ENCODE measurements at regions of chr1 and their contacts with region 1.

Region 1: DNA sequence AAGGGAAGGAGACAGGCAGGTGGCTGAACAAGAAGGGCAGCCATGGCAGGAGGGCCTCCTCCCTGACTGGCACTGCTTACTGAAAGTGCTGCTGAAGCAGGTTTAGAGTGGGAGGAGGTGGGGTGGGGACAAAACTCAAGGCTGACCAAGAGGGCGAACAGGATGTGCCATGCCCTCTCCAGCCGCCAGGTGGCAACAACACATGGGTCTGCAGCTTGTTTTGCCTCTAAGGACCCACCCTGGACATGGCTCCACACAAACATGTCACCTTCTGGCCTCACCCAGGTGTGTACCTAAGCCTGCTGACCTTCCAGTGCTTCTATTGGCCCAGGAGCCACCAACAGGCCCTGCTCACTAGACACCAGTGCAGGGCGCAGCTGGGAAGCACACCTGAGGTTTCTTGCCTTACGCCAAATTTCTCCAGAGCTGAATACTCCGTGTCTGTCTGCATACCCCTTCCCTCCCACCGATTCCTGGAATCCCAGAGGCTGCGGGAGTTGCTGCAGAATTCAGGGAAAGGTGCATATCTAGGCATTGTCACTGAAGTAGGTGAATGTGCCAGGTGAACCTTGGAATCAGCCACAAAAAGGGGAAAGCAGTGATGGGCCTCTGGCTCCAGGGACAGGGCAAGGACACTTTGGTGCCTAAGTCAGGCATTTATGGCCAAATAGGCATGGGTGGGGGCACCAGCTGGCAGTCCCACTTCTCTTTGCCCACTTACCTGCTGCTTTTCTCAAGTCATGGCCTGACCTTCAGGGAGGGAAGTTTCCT is 5.3 kb downstream of the PSRC1 start:
- DNase-seq: peak; percentile 56
- H3K4me3 ChIP-seq: no peak overlapping the region
- H3K27ac ChIP-seq: no peak overlapping the region
- H3K4me1 ChIP-seq: peaks cover 59% of the 10 kb centered on the region
- H3K27me3 ChIP-seq: no peaks in the 10 kb centered on the region
- CTCF ChIP-seq: peak; percentile 92 to 94

Region 2: GRCh38 chr1:109239580-109240095 is 38.0 kb before region 1 on chr1:
- CTCF ChIA-PET with region 1: no interaction called
- dilution Hi-C with region 1: loop called (anchors 5 kb)
- in situ Hi-C with region 1: no loop called
- intact Hi-C with region 1: no loop called
- DNase-seq: peak; percentile 61
- H3K4me3 ChIP-seq: no peak overlapping the region
- H3K27ac ChIP-seq: peak overlapping the region; percentile 95
- H3K4me1 ChIP-seq: peaks cover 33% of the 10 kb centered on the region
- H3K27me3 ChIP-seq: no peaks in the 10 kb centered on the region
- CTCF ChIP-seq: peak; percentile 55 to 81

Region 3: DNA sequence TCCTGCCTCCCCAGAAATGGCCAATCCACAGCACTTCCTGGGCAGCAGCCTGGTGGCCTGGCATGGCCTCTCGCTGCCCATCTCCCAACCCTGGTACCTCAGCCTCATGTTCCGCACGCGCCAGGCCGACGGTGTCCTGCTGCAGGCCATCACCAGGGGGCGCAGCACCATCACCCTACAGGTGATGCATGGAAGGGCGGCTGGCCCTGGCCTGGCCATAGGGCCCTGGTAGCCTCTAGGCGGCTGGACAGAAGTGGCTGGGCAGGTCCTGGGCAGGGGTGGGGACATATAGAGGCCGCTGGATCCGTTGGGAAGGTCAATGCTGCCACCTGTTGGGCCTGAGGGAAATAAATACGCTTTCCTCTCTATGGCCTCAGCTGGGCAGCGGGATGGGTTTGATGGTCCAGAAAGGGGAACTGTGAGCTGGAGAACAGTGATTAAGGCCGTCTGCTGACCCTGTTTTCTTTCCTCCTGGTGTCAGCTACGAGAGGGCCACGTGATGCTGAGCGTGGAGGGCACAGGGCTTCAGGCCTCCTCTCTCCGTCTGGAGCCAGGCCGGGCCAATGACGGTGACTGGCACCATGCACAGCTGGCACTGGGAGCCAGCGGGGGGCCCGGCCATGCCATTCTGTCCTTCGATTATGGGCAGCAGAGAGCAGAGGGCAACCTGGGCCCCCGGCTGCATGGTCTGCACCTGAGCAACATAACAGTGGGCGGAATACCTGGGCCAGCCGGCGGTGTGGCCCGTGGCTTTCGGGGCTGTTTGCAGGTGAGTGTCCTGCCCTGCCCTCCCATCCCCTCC is 13.8 kb before region 1 on chr1:
- CTCF ChIA-PET with region 1: interaction called, 4 read pairs
- dilution Hi-C with region 1: no loop called
- in situ Hi-C with region 1: no loop called
- intact Hi-C with region 1: loop called (anchors 1 kb)
- DNase-seq: no peak
- H3K4me3 ChIP-seq: no peak overlapping the region
- H3K27ac ChIP-seq: peak overlapping the region; percentile 40
- H3K4me1 ChIP-seq: peaks cover 32% of the 10 kb centered on the region
- H3K27me3 ChIP-seq: no peaks in the 10 kb centered on the region
- CTCF ChIP-seq: peak; percentile 100

Region 4: DNA sequence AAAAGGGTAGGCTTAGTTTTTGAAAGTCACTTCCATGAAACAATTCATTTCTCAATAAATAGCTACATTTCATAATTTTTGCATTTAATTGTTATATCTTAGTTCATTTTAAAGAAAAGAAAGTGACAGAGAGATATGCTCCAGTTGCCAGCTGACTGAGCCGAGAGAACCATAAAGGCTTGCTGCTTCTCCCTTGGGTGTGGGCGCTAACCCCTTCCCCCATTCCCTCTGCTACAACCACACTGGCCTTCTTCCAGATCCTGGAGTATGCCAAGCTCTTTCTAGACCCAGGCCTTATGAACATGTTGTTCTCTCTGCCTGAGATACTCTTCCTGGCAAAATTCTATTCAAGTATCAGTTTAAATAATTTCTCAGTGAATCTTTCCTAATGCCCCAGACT is 107.8 kb after region 1 on chr1:
- CTCF ChIA-PET with region 1: no interaction called
- dilution Hi-C with region 1: no loop called
- in situ Hi-C with region 1: no loop called
- intact Hi-C with region 1: no loop called
- DNase-seq: no peak
- H3K4me3 ChIP-seq: no peak overlapping the region
- H3K27ac ChIP-seq: no peak overlapping the region
- H3K4me1 ChIP-seq: no peaks in the 10 kb centered on the region
- H3K27me3 ChIP-seq: no peaks in the 10 kb centered on the region
- CTCF ChIP-seq: no peak

Region 5: DNA sequence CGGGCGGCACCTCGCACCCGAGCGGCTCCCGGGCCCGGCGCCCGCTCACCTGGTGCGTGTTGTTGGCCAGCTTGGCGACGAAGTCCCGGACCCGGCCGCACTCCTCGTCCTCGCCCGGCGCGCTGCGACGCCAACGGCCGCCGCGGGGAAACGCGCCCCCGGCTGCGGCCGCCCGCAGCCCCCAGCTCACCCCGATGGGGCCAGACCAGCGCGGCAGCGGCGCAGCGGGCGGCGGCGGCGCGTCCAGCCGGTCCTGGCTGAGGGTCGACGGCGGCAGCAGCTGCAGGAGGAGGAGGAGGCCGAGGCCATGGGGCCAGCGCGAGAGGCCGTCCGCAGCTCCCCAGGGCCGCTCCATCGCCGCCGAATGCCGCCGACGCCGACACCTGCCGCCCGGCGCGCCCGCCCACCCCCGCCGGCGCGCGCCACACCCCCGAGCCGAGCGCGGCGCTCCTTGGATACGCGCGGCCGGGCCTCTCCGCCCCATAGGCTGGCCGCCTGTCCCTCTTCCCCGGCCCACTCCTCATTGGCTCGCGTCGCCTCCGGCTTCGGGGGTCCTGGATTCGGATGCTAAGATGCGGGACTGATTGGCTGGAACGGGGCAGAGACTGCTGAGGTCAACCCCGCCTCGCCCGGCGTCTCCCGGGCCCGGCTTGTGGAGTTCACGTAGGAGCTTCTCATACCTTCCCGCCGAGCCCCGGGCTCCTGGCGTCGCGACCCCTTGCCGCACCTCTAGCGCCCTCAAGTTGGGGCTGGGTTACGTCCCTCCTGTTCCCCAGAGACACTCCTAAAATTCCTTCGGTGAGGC is 120.1 kb after region 1 on chr1 and contains the start of gene SORT1:
- CTCF ChIA-PET with region 1: interaction called, 5 read pairs
- dilution Hi-C with region 1: loop called (anchors 5 kb)
- in situ Hi-C with region 1: no loop called
- intact Hi-C with region 1: loop called (anchors 1 kb)
- DNase-seq: peak; percentile 77
- H3K4me3 ChIP-seq: peak within 1 kb of the TSS; percentile 54 to 73 (median 65)
- H3K27ac ChIP-seq: peak within 1 kb of the TSS; percentile 16
- H3K4me1 ChIP-seq: peaks cover 20% of the 10 kb centered on the region
- H3K27me3 ChIP-seq: no peaks in the 10 kb centered on the region
- CTCF ChIP-seq: no peak
- total RNA-seq, gene SORT1: 24.6 to 41.8 TPM

Measured in mammary epithelial cell (primary cell).